Posterior cingulate gyrus (tissue), 11 donors: ENCODE measurements at regions of chr10 and their contacts with region 1.

Region 1: DNA sequence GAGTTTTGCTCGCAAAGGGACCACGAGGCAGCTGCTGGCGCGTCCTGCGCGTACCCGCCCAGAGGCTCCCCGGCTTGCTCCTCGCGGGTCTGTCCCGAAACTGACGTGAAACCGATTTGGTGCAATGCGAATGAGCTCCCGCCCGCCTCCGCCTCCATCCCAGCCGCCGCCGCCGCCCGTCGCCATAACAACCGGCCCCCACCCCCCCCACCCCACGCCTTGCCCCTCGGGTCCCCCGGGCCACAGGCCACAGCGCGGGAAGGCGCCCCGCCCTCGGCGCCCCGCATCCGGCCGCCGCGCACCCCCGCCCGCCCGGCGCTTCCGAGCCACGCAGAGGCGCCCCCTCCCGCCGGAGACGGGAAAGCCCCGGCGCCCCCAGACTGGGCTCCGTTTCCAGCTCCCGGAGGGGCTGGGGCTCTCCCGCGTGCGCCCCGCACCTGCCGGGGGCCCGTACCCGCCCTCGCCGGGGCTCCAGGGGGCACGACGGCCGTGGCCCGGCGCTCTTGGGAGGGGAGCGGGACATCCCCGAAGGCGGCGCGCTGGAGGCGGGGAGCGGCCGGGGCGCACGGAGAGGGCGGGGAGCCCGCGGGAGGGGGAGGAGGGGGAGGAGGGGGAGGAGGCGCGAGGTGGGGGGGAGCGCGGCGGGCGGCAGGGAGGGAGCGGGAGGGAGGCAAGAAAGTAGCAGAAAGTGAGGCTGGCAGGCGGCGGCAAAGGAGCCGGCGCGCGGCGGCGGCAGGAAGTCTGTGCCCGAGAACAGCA is at the start of gene CAMK1D:
- DNase-seq: peak; percentile 30 to 96 (median 72)

Region 2: DNA sequence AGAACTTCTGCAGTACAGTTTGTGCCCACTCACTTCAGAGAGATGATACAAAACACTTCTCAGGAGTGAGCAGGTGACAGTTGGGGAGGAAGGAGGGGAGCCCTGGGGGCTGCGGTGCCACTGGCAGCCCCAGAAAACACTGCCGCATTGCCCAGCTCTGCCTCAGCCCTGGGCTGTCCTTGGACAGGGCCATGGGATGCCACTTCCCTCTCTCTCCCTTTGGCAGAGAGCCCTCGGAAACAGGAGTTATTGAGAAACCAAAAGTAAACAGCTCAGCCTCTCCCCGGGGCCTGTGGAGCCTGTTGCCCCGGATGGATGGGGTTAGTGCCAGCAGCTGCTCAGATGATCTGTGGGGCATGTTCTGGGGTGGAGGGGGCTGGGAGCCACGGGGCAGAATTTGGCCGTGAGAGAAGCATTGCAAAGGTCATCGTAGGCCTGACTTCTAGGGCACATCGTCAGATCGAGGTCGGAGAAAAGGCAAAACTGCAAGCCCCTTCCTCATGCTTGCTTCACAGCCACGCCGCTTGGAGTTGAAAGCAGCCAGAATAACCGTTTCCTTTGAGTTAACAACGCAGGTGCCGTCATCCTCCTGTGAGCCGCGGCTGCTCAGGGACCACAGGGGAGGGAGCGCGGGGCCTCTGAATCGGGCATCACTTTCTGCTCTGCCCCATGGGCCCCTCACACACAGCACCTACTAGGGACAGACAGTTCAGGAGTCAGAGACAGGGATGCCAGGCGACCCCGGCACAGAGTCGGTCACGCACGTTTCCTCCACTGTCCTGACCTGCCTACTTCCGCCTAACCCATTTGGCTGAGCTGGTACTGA is 256.7 kb after region 1 on chr10:
- intact Hi-C with region 1: loop called (anchors 10 kb)
- DNase-seq: peak in 9 of 10 donors; percentile 32 to 86 (median 45)